ENCODE measurements at regions of chr17 and their contacts with region 1.

Region 1: DNA sequence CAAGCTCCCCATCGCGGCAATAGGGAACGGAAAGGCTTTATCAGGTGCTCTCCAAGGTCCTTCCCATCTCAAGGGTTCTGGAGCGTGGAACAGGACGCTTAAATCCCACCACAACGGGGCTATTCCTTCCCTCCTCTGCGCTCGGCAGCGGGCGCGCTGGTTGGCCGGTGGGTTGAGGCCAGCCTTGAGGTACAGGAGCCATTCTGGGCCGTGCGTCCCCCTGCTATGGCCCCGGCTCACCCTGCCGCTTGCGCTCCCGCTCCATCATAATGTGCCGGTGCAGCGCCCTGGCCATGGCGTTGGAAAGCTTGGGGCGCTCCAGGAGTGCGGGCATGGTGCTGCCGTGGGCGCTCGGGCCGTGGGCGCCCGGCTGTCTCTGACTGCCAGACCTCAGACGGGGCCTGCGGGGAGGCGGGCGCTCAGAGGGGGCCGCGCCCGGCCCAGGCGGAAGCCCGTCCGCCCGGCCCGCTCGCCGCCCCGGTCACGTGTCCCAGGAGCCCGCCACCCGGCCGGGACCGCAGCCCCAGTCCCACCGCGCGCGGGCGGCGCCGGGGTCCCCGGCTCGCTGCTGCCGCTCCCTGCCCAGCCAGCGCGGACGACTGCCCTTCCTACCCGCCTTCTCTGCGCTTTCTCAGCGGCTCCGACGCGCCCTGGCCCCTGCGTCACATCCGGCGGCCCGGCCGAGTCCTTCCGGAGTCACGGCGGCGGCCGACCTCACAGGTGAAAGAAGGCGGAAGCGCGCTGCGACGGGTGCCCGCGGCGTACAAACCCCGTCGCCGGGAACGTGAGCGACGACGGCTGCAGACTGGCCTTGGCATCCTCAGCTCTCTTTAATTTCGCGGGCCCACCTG is at the start of gene GPS2:
- DNase-seq: peak; percentile 97
- ATAC-seq: peak; percentile 86
- H3K4me3 Mint-ChIP-seq: peak within 1 kb of the TSS; percentile 93
- H3K27ac Mint-ChIP-seq: peak within 1 kb of the TSS; percentile 95
- H3K4me1 Mint-ChIP-seq: peaks cover 31% of the 10 kb centered on the region
- H3K27me3 Mint-ChIP-seq: no peaks in the 10 kb centered on the region
- total RNA-seq, gene GPS2: 97.1 to 98.5 TPM

Region 2: DNA sequence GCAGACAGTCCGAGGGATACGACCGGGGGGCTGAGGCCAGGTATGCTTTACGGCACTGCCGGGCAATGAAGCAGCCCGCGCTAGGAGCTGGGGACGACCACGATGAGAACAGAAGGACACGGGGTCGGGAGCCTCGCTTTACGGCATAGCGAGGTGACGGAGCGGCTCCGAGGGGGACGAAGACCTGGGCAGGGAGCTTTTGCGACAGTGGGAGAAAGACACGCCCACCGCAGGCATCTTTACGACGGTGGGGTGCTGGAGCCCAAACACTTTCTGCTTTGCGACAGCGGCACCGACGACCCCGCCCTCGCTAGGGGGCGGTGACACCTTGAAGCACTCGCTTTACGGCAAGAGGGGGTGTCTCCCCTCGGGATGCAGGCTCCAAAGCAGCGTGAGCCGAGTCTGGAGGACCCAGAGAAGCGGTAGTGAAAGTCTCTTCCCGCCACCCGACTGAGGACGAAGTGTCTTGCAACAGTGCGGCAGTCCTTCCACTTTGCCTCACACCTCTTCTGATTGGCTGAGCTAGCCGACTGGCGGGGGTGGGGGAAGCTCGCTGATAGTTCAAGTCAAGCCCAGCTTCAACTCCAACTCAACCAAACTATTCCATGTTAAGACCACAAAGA is 14.5 kb after region 1 on chr17:
- POLR2A ChIA-PET with region 1: interaction called, 29 read pairs
- DNase-seq: peak; percentile 94
- ATAC-seq: peak; percentile 59
- H3K4me3 Mint-ChIP-seq: peak overlapping the region; percentile 88
- H3K27ac Mint-ChIP-seq: peak overlapping the region; percentile 93
- H3K4me1 Mint-ChIP-seq: peaks cover 26% of the 10 kb centered on the region
- H3K27me3 Mint-ChIP-seq: no peaks in the 10 kb centered on the region

Measured in activated naive CD8-positive, alpha-beta T cell treated with anti-CD3 and anti-CD28 coated beads, Interleukin-2, amount 10 ng/mL, durations not matched to agents 7 days and 5 days (primary cell).